ENCODE measurements at regions of chr19 and their contacts with region 1.

Region 1: GRCh38 chr19:13588957-13589833 is 82.9 kb upstream of the CACNA1A start:
- DNase-seq: no peak
- H3K4me3 ChIP-seq: no peak overlapping the region; the same call in 1 of the 2 replicates
- CTCF ChIP-seq: peak; percentile 99

Region 2: GRCh38 chr19:13284929-13285928 is 304.0 kb before region 1 on chr19:
- CTCF ChIA-PET with region 1: interaction called, 265 read pairs
- POLR2A ChIA-PET with region 1: no interaction called
- DNase-seq: no peak
- H3K4me3 ChIP-seq: no peak overlapping the region
- CTCF ChIP-seq: no peak

Region 3: GRCh38 chr19:13487985-13488384 is 101.2 kb before region 1 on chr19:
- CTCF ChIA-PET with region 1: interaction called, 10 read pairs
- POLR2A ChIA-PET with region 1: no interaction called
- DNase-seq: no peak
- H3K4me3 ChIP-seq: no peak overlapping the region
- CTCF ChIP-seq: no peak

Region 4: DNA sequence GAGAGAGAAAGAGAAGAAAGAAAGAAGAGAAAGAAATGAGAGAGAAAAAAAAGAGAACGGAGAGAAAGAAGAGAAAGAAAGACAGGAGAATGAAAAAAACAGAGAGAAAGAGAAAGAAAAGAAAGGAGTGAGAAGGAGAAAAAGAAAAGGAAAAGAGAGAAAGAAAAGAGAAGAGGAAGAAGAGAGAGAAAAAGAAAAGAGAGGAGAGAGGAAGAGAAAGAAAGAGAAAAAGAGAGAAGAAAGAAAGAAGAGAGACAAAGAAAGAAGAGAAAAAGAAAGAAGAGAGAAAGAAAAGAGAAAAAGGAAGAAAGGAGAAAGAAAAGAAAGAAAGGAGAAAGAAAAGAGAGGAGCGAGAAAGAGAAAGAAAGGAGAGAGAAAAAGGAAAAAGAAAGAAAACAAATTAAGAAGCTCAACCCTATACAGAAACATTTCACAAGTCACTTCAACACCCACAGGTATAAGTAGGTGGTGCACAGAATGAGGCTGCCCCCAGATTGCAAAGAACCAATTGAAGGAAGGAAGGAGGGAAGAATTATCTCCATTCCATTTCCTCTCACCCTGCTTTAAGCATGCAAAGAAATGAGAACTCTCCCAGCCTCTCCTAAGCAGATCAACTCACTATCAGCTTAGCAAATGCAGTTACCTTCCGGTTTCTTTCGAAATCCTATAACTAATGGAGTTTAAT is 15.8 kb after region 1 on chr19:
- CTCF ChIA-PET with region 1: interaction called, 28 read pairs
- POLR2A ChIA-PET with region 1: no interaction called
- DNase-seq: no peak
- H3K4me3 ChIP-seq: no peak overlapping the region
- CTCF ChIP-seq: no peak

Region 5: GRCh38 chr19:13700621-13701020 is 111.4 kb after region 1 on chr19:
- CTCF ChIA-PET with region 1: no interaction called
- POLR2A ChIA-PET with region 1: no interaction called
- DNase-seq: no peak
- H3K4me3 ChIP-seq: no peak overlapping the region
- CTCF ChIP-seq: no peak

Region 6: GRCh38 chr19:13718733-13719132 is 129.5 kb after region 1 on chr19:
- CTCF ChIA-PET with region 1: interaction called, 278 read pairs
- POLR2A ChIA-PET with region 1: no interaction called
- DNase-seq: peak; percentile 53
- H3K4me3 ChIP-seq: no peak overlapping the region
- CTCF ChIP-seq: peak; percentile 53